ENCODE measurements at regions of chr17 and their contacts with region 1.

Region 1: GRCh38 chr17:75430159-75430974 is 24.9 kb upstream of the GRB2 start:
- DNase-seq: peak in 2 of 4 donors; percentile 13 to 22
- ATAC-seq: no peak
- H3K4me3 ChIP-seq: no peak overlapping the region
- H3K27ac ChIP-seq: no peak overlapping the region
- H3K4me1 ChIP-seq: peaks cover 5% of the 10 kb centered on the region
- H3K27me3 ChIP-seq: no peaks in the 10 kb centered on the region
- CTCF ChIP-seq: no peak
- POLR2A ChIP-seq: no peak

Region 2: GRCh38 chr17:75325827-75326225 is 104.5 kb before region 1 on chr17:
- intact Hi-C with region 1: no loop called
- DNase-seq: no peak
- ATAC-seq: no peak
- H3K4me3 ChIP-seq: no peak overlapping the region
- H3K27ac ChIP-seq: no peak overlapping the region
- H3K4me1 ChIP-seq: peaks cover 4% of the 10 kb centered on the region
- H3K27me3 ChIP-seq: no peaks in the 10 kb centered on the region
- CTCF ChIP-seq: no peak
- POLR2A ChIP-seq: no peak

Region 3: DNA sequence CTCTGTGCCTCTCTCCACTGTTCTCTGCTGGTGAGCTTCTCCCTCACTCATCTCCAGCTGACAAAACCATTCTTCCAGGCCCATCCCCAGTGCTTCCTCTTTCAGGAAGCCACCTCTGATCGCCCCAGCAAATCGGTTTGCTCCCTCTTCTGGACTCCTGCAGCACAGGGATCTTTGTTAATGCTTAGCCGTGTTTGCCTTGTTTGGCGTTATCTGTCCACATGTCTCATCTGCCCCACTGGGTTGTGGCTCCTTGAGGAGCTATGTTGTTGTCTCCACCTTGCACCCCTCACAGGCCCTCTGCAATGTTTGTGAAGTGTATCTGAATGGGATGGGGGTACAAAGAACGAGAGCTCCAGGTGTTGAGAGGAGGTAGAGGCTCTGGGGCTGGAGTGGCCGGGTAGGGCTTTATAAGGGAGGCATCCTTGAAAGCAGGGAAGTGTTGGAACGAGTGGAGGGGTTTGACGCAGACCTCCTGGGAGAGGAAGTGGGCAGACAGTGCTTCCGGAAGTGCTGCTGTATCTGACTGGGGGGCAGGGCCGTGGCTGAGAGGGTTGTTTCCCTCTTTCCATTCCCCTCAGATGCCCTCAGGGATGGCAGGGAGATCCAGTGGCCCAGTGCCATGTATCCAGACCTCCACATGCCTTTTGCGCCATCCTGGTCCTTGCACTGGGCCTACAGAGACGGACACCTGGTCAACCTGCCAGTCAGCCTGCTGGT is 57.1 kb after region 1 on chr17:
- intact Hi-C with region 1: loop called (anchors 10 kb)
- DNase-seq: peak in 2 of 4 donors; percentile 19 to 55
- ATAC-seq: no peak
- H3K4me3 ChIP-seq: no peak overlapping the region
- H3K27ac ChIP-seq: peak overlapping the region in 2 of 4 donors; percentile 25 to 59
- H3K4me1 ChIP-seq: peaks cover 12% of the 10 kb centered on the region
- H3K27me3 ChIP-seq: no peaks in the 10 kb centered on the region
- CTCF ChIP-seq: no peak
- POLR2A ChIP-seq: no peak

Region 4: GRCh38 chr17:75501378-75502071 is 71.2 kb after region 1 on chr17:
- intact Hi-C with region 1: loop called (anchors 2 kb)
- DNase-seq: no peak
- ATAC-seq: no peak
- H3K4me3 ChIP-seq: no peak overlapping the region
- H3K27ac ChIP-seq: no peak overlapping the region
- H3K4me1 ChIP-seq: no peaks in the 10 kb centered on the region
- H3K27me3 ChIP-seq: no peaks in the 10 kb centered on the region
- CTCF ChIP-seq: no peak
- POLR2A ChIP-seq: no peak

Region 5: DNA sequence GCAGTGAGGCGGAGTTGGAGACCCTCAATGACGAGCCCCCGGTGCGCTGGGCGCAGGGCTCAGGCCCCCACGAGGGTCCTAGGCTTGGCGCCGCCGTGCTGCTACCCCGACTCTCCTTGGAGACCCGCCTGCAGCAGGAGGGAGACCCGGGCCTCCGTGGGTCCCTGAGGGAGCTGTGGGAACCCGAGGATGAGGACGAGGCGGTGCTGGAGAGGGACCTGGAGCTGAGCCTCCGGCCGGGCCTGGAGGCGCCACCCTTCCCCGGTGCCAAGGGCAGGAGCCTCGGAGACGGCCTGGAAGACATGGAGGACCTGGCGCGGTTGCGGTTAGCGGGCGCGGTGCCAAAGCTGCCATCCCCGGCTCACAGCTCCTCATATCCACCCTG is 159.5 kb after region 1 on chr17:
- intact Hi-C with region 1: loop called (anchors 5 kb)
- DNase-seq: peak in 3 of 4 donors; percentile 31 to 47 (median 40)
- ATAC-seq: no peak
- H3K4me3 ChIP-seq: no peak overlapping the region
- H3K27ac ChIP-seq: peak overlapping the region in 3 of 4 donors; percentile 19 to 89 (median 75)
- H3K4me1 ChIP-seq: peaks cover 25% of the 10 kb centered on the region
- H3K27me3 ChIP-seq: no peaks in the 10 kb centered on the region
- CTCF ChIP-seq: no peak
- POLR2A ChIP-seq: no peak

Region 6: GRCh38 chr17:75693500-75694481 is 263.4 kb after region 1 on chr17:
- intact Hi-C with region 1: no loop called
- DNase-seq: peak; percentile 57 to 81 (median 73)
- ATAC-seq: peak; percentile 18
- H3K4me3 ChIP-seq: no peak overlapping the region
- H3K27ac ChIP-seq: peak overlapping the region; percentile 27 to 86 (median 79)
- H3K4me1 ChIP-seq: peaks cover 81% of the 10 kb centered on the region
- H3K27me3 ChIP-seq: no peaks in the 10 kb centered on the region
- CTCF ChIP-seq: peak in 2 of 7 experiments; percentile 9 to 22
- POLR2A ChIP-seq: peak in 1 of 3 donors; percentile 38

Measured in body of pancreas (tissue), 4 donors.